HEK293 (cell line): ENCODE measurements at regions of chr10 and their contacts with region 1.

Region 1: GRCh38 chr10:102225646-102226541 is at the start of gene ELOVL3:
- H3K4me3 ChIP-seq: no peak within 1 kb of the TSS
- H3K27ac ChIP-seq: no peak within 1 kb of the TSS
- H3K4me1 ChIP-seq: peaks cover 7% of the 10 kb centered on the region
- CTCF ChIP-seq: no peak

Region 2: GRCh38 chr10:101959349-101959916 is 266.5 kb before region 1 on chr10:
- CTCF ChIA-PET with region 1: no interaction called
- POLR2A ChIA-PET with region 1: no interaction called
- H3K4me3 ChIP-seq: no peak overlapping the region
- H3K27ac ChIP-seq: no peak overlapping the region
- H3K4me1 ChIP-seq: peaks cover 5% of the 10 kb centered on the region; the same call in 1 of the 2 replicates
- CTCF ChIP-seq: no peak

Region 3: GRCh38 chr10:102167861-102168260 is 58.0 kb before region 1 on chr10:
- CTCF ChIA-PET with region 1: interaction called, 32 read pairs
- POLR2A ChIA-PET with region 1: interaction called, 11 read pairs
- H3K4me3 ChIP-seq: no peak overlapping the region
- H3K27ac ChIP-seq: no peak overlapping the region
- H3K4me1 ChIP-seq: no peaks in the 10 kb centered on the region
- CTCF ChIP-seq: no peak

Region 4: DNA sequence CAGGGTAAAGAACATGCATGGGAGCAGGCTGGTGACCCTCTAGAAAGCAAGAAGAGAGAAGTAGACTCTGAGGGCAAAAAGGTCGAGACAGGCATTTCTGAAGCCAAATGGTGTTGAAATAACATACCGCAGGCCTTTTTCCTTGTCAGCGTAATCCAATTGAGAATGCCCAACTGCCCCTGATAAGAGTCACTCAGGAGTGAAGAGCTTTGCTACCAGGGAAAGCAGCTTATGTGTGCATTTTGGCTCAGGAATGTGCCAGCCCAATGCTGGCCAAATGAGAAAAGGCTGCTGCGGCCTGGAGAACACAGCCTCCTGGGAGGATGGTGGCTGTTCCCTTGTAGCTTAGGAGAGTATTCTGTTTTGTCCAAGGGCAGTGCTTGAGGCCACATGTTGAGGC is 108.2 kb after region 1 on chr10:
- CTCF ChIA-PET with region 1: interaction called, 35 read pairs
- POLR2A ChIA-PET with region 1: no interaction called
- H3K4me3 ChIP-seq: no peak overlapping the region
- H3K27ac ChIP-seq: no peak overlapping the region
- H3K4me1 ChIP-seq: no peaks in the 10 kb centered on the region
- CTCF ChIP-seq: no peak

Region 5: GRCh38 chr10:102384053-102384452 is 158.2 kb after region 1 on chr10:
- CTCF ChIA-PET with region 1: interaction called, 11 read pairs
- POLR2A ChIA-PET with region 1: no interaction called
- H3K4me3 ChIP-seq: no peak overlapping the region
- H3K27ac ChIP-seq: no peak overlapping the region
- H3K4me1 ChIP-seq: 0 out of 2 replicates have a peak, but pooled peaks cover 2% of the 10 kb centered on the region
- CTCF ChIP-seq: no peak

Region 6: GRCh38 chr10:102408728-102409603 is 183.1 kb after region 1 on chr10:
- CTCF ChIA-PET with region 1: interaction called, 14 read pairs
- POLR2A ChIA-PET with region 1: no interaction called
- H3K4me3 ChIP-seq: peak overlapping the region; percentile 28
- H3K27ac ChIP-seq: no peak overlapping the region
- H3K4me1 ChIP-seq: no peaks in the 10 kb centered on the region; the same call in 1 of the 2 replicates
- CTCF ChIP-seq: no peak; the same call in none of the 2 replicates

Region 7: GRCh38 chr10:102583435-102584417 is 357.8 kb after region 1 on chr10:
- CTCF ChIA-PET with region 1: interaction called, 31 read pairs
- POLR2A ChIA-PET with region 1: interaction called, 5 read pairs
- H3K4me3 ChIP-seq: no peak overlapping the region
- H3K27ac ChIP-seq: no peak overlapping the region
- H3K4me1 ChIP-seq: peaks cover 15% of the 10 kb centered on the region
- CTCF ChIP-seq: peak; percentile 76